Activated CD8-positive, alpha-beta memory T cell treated with anti-CD3 and anti-CD28 coated beads, Interleukin-2, amount 10 ng/mL, durations not matched to agents 7 days and 5 days (primary cell): ENCODE measurements at regions of chr3 and their contacts with region 1.

Region 1: DNA sequence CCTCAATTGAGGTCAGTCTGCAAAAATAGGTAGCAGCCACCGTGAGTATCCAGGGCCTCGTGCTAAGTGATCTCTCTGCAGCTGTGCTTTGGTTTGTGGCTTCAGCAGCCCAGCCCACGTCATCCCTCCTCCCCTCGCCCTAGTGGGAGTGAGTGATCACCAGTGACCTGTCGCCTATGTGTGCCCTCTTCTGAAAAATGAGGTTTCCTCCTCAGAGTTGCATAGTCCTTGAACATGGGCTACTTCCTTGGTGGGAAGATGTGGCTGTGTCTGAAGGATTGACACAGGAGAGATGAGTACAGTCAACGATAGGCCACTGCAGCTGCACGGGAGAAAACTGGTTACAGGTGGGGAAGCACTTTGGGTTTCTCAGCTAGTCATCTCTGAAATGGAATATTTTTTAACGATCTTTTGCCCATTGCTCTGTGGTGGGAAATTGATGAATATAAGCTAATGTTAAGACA is 144.8 kb upstream of the BHLHE40 start:
- DNase-seq: peak; percentile 95
- ATAC-seq: peak; percentile 63
- H3K4me3 Mint-ChIP-seq: peak overlapping the region; percentile 71
- H3K27ac Mint-ChIP-seq: peak overlapping the region; percentile 97
- H3K4me1 Mint-ChIP-seq: peaks cover 89% of the 10 kb centered on the region
- H3K27me3 Mint-ChIP-seq: no peaks in the 10 kb centered on the region

Region 2: GRCh38 chr3:4360817-4361216 is 473.6 kb before region 1 on chr3:
- CTCF ChIA-PET with region 1: no interaction called
- DNase-seq: no peak
- ATAC-seq: no peak
- H3K4me3 Mint-ChIP-seq: no peak overlapping the region
- H3K27ac Mint-ChIP-seq: no peak overlapping the region
- H3K4me1 Mint-ChIP-seq: no peaks in the 10 kb centered on the region
- H3K27me3 Mint-ChIP-seq: no peaks in the 10 kb centered on the region

Region 3: DNA sequence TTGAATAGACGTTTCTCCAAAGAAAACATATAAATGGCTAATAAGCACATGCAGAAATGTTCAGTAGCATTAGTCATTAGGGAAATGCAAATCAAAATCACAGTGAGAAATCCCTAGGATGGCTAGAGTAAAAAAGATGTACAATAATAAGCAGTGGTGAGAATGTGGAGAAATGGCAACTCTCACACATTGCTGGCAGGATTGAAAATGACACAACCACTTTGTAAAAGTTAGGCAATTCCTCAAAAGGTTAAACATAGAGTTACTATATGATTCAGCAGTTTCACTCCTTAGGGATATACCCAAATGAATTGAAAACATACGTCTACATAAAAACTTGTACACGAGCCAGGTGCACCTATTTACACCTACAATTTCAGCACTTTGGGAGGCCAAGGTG is 232.5 kb before region 1 on chr3:
- CTCF ChIA-PET with region 1: no interaction called
- DNase-seq: no peak
- ATAC-seq: no peak
- H3K4me3 Mint-ChIP-seq: no peak overlapping the region
- H3K27ac Mint-ChIP-seq: no peak overlapping the region
- H3K4me1 Mint-ChIP-seq: no peaks in the 10 kb centered on the region
- H3K27me3 Mint-ChIP-seq: no peaks in the 10 kb centered on the region

Region 4: GRCh38 chr3:4772171-4772804 is 62.1 kb before region 1 on chr3:
- CTCF ChIA-PET with region 1: no interaction called
- DNase-seq: no peak
- ATAC-seq: no peak
- H3K4me3 Mint-ChIP-seq: no peak overlapping the region
- H3K27ac Mint-ChIP-seq: no peak overlapping the region
- H3K4me1 Mint-ChIP-seq: peaks cover 55% of the 10 kb centered on the region
- H3K27me3 Mint-ChIP-seq: no peaks in the 10 kb centered on the region

Region 5: DNA sequence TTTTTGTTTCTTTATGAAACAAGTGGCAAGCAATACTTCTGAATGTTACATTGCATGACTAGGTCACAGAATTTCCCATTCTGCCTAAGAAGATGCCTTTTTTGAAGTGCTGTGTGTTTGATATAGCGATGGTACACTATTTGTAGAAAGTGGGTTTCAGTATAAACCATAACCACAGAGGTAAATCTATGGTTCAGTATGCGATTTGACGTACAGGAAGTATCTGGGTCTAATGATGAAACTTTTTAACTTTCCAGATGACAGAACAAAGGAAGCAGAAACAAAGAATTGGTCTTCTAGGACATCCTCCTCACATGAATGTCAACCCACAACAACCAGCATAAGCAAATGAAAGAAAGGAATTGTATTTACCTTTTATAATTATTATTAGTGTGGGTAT is 11.4 kb after region 1 on chr3:
- CTCF ChIA-PET with region 1: interaction called, 22 read pairs
- DNase-seq: no peak
- ATAC-seq: peak; percentile 55
- H3K4me3 Mint-ChIP-seq: peak overlapping the region; percentile 31
- H3K27ac Mint-ChIP-seq: peak overlapping the region; percentile 90
- H3K4me1 Mint-ChIP-seq: peaks cover 96% of the 10 kb centered on the region
- H3K27me3 Mint-ChIP-seq: no peaks in the 10 kb centered on the region

Region 6: GRCh38 chr3:5016218-5017161 is 182.1 kb after region 1 on chr3:
- CTCF ChIA-PET with region 1: no interaction called
- DNase-seq: peak; percentile 83
- ATAC-seq: peak; percentile 70
- H3K4me3 Mint-ChIP-seq: no peak overlapping the region
- H3K27ac Mint-ChIP-seq: peak overlapping the region; percentile 85
- H3K4me1 Mint-ChIP-seq: peaks cover 94% of the 10 kb centered on the region
- H3K27me3 Mint-ChIP-seq: no peaks in the 10 kb centered on the region